Panc1 (cell line): ENCODE measurements at regions of chr3 and their contacts with region 1.

Region 1: DNA sequence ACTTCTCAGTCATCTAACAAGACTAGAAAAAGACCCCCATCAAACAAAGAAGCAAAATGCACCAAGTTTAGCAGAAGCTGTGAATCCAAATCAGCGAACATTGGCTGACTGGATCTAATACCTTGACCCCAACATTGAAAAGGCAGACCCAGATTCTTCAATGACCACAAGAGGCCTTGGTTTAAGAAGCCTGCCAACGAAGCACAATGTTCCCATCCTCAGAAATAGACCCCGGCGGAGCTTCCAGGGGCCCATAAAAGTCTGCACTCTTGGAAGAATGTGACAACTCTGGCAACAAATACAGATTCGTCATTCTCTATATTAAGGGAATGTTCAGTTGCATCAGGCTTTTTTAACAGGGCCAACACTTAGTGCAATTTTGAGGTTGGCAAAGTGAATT is 112.8 kb upstream of the BCL6 start:
- DNase-seq: no peak
- ATAC-seq: no peak
- H3K4me3 ChIP-seq: no peak overlapping the region
- H3K27ac ChIP-seq: no peak overlapping the region
- H3K4me1 ChIP-seq: no peaks in the 10 kb centered on the region
- H3K27me3 ChIP-seq: no peaks in the 10 kb centered on the region
- CTCF ChIP-seq: no peak

Region 2: GRCh38 chr3:187878776-187879518 is 20.9 kb after region 1 on chr3:
- CTCF ChIA-PET with region 1: no interaction called
- POLR2A ChIA-PET with region 1: interaction called, 10 read pairs
- in situ Hi-C with region 1: no loop called
- intact Hi-C with region 1: no loop called
- DNase-seq: no peak
- ATAC-seq: no peak
- H3K4me3 ChIP-seq: no peak overlapping the region
- H3K27ac ChIP-seq: no peak overlapping the region
- H3K4me1 ChIP-seq: no peaks in the 10 kb centered on the region
- H3K27me3 ChIP-seq: no peaks in the 10 kb centered on the region
- CTCF ChIP-seq: no peak